Naive thymus-derived CD8-positive, alpha-beta T cell (primary cell): ENCODE measurements at regions of chr3 and their contacts with region 1.

Region 1: GRCh38 chr3:15319575-15319974 is 12.8 kb downstream of the SH3BP5 start:
- DNase-seq: no peak
- ATAC-seq: no peak
- H3K4me3 Mint-ChIP-seq: peak overlapping the region in 5 of 10 donors; percentile 2 to 64 (median 36)
- H3K27ac Mint-ChIP-seq: peak overlapping the region in 4 of 10 donors; percentile 21 to 81 (median 54)
- H3K4me1 Mint-ChIP-seq: peaks cover 25 to 80% (median 55%) of the 10 kb centered on the region in 4 donors
- H3K27me3 Mint-ChIP-seq: no peaks in the 10 kb centered on the region

Region 2: GRCh38 chr3:15303728-15304127 is 15.8 kb before region 1 on chr3:
- POLR2A ChIA-PET with region 1: interaction called, 12 read pairs
- DNase-seq: no peak
- ATAC-seq: no peak
- H3K4me3 Mint-ChIP-seq: peak overlapping the region in 9 of 10 donors; percentile 56 to 87 (median 68)
- H3K27ac Mint-ChIP-seq: peak overlapping the region in 8 of 10 donors; percentile 70 to 91 (median 88)
- H3K4me1 Mint-ChIP-seq: peaks cover 33 to 85% (median 68%) of the 10 kb centered on the region in 4 donors
- H3K27me3 Mint-ChIP-seq: no peaks in the 10 kb centered on the region